CD14-positive monocyte (primary cell): ENCODE measurements at regions of chr11 and their contacts with region 1.

Region 1: DNA sequence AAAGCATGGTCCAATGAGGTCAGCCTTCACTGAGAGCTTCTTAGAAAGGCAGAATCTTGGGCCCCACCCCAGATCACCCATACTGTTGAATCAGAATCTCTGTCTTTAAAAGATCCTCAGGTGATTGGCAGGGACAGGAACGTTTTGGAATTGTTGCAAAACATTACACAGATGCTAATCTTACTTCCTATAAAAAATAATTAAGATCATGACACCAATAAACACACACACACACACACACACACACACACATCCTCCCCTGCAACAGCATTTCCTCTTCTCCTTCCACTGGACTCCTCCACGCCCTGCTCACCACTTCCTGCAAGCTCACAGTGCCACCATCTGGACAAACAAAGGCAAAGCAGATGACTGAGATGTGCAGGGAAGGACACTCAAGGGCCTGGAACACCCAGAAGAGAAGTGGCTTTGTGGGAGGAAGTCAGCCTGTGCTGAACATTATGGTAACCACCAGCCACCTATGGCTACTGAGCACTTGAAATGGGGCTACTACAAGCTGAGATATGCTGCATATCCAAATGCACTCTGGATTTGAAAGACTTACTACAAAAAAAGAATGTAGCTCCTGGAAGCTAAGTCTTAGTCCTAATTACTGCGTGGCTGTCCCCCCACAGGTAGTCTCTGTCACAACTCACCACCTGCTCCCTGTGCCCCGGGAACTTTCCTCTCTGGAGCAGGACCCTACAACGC is 65.6 kb downstream of the BTG4 start:
- DNase-seq: peak; percentile 87 to 95 (median 94)
- H3K4me3 ChIP-seq: no peak overlapping the region
- H3K4me3 Mint-ChIP-seq: no peak overlapping the region
- H3K27ac ChIP-seq: no peak overlapping the region
- H3K27ac Mint-ChIP-seq: peak overlapping the region in 5 of 7 donors; percentile 30 to 81 (median 55)
- H3K4me1 ChIP-seq: peaks cover 4 to 11% of the 10 kb centered on the region in 2 donors
- H3K4me1 Mint-ChIP-seq: peaks cover 14% of the 10 kb centered on the region
- H3K27me3 ChIP-seq: no peaks in the 10 kb centered on the region
- H3K27me3 Mint-ChIP-seq: peaks cover 3 to 4% (median 3%) of the 10 kb centered on the region in 3 donors
- CTCF ChIP-seq: peak; percentile 66

Region 2: GRCh38 chr11:111283945-111284481 is 162.5 kb before region 1 on chr11:
- intact Hi-C with region 1: loop called (anchors 5 kb)
- DNase-seq: no peak
- H3K4me3 ChIP-seq: no peak overlapping the region
- H3K4me3 Mint-ChIP-seq: peak overlapping the region; percentile 30 to 59
- H3K27ac ChIP-seq: no peak overlapping the region
- H3K27ac Mint-ChIP-seq: no peak overlapping the region
- H3K4me1 ChIP-seq: no peaks in the 10 kb centered on the region
- H3K4me1 Mint-ChIP-seq: peaks cover 5% of the 10 kb centered on the region
- H3K27me3 ChIP-seq: no peaks in the 10 kb centered on the region
- H3K27me3 Mint-ChIP-seq: peaks cover under 1 to 6% (median 2%) of the 10 kb centered on the region in 3 donors
- CTCF ChIP-seq: no peak